ENCODE measurements at regions of chr5 and their contacts with region 1.

Region 1: GRCh38 chr5:171961117-171961516 is 45.3 kb downstream of the FBXW11 start:
- DNase-seq: peak; percentile 65
- ATAC-seq: peak; percentile 64
- H3K4me3 Mint-ChIP-seq: no peak overlapping the region
- H3K27ac Mint-ChIP-seq: peak overlapping the region; percentile 72
- H3K4me1 Mint-ChIP-seq: peaks cover 92% of the 10 kb centered on the region
- H3K27me3 Mint-ChIP-seq: no peaks in the 10 kb centered on the region

Region 2: GRCh38 chr5:171984748-171985419 is 23.8 kb after region 1 on chr5:
- CTCF ChIA-PET with region 1: interaction called, 4 read pairs
- POLR2A ChIA-PET with region 1: interaction called, 3 read pairs
- intact Hi-C with region 1: loop called (anchors 1 to 2 kb)
- DNase-seq: peak; percentile 64
- ATAC-seq: peak; percentile 83
- H3K4me3 Mint-ChIP-seq: no peak overlapping the region
- H3K27ac Mint-ChIP-seq: peak overlapping the region; percentile 56
- H3K4me1 Mint-ChIP-seq: peaks cover 48% of the 10 kb centered on the region
- H3K27me3 Mint-ChIP-seq: no peaks in the 10 kb centered on the region

Region 3: GRCh38 chr5:172015346-172015745 is 54.2 kb after region 1 on chr5:
- CTCF ChIA-PET with region 1: no interaction called
- POLR2A ChIA-PET with region 1: no interaction called
- intact Hi-C with region 1: no loop called
- DNase-seq: no peak
- ATAC-seq: peak; percentile 58
- H3K4me3 Mint-ChIP-seq: no peak overlapping the region
- H3K27ac Mint-ChIP-seq: no peak overlapping the region
- H3K4me1 Mint-ChIP-seq: no peaks in the 10 kb centered on the region
- H3K27me3 Mint-ChIP-seq: no peaks in the 10 kb centered on the region